ENCODE measurements at regions of chr6 and their contacts with region 1.

Region 1: GRCh38 chr6:32933636-32934085 is 7.2 kb downstream of the HLA-DMB start:
- DNase-seq: peak; percentile 56 to 88 (median 68)
- ATAC-seq: peak; percentile 53 to 80
- H3K4me3 Mint-ChIP-seq: no peak overlapping the region
- H3K27ac Mint-ChIP-seq: peak overlapping the region in 4 of 10 donors; percentile 6 to 63 (median 38)
- H3K4me1 Mint-ChIP-seq: peaks cover 5 to 60% (median 9%) of the 10 kb centered on the region in 4 donors
- H3K27me3 Mint-ChIP-seq: no peaks in the 10 kb centered on the region

Region 2: DNA sequence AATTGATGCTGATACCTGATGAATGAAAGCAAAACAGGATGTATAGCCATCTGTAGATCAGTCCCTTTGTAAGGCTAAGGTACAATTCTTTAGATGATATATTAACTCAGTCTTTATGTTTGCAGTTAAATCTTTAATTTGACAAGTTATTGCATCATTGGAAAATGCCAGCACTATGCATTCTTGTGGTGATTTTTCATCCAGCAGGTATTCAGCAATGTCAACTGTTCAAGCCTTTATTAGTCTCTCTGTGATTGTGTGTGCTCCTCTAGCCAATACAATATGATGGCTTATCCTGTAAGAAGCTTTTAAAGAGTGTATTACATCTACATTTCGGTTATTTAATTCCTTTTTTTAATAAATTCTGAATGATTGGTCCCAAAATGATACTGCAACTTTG is 27.1 kb before region 1 on chr6:
- POLR2A ChIA-PET with region 1: no interaction called
- DNase-seq: no peak
- ATAC-seq: no peak
- H3K4me3 Mint-ChIP-seq: no peak overlapping the region
- H3K27ac Mint-ChIP-seq: no peak overlapping the region
- H3K4me1 Mint-ChIP-seq: no peaks in the 10 kb centered on the region
- H3K27me3 Mint-ChIP-seq: peaks cover 0 to 5% (median 2%) of the 10 kb centered on the region in 5 donors

Region 3: GRCh38 chr6:32947552-32948465 is 14.1 kb after region 1 on chr6:
- POLR2A ChIA-PET with region 1: interaction called, 30 read pairs
- DNase-seq: peak in 6 of 10 donors; percentile 23 to 52 (median 42)
- ATAC-seq: peak in 1 of 2 donors; percentile 24
- H3K4me3 Mint-ChIP-seq: no peak overlapping the region
- H3K27ac Mint-ChIP-seq: peak overlapping the region in 7 of 10 donors; percentile 14 to 66 (median 45)
- H3K4me1 Mint-ChIP-seq: peaks cover 43 to 90% (median 62%) of the 10 kb centered on the region in 4 donors
- H3K27me3 Mint-ChIP-seq: no peaks in the 10 kb centered on the region